Tibial artery (tissue), 4 donors: ENCODE measurements at regions of chr3 and their contacts with region 1.

Region 1: DNA sequence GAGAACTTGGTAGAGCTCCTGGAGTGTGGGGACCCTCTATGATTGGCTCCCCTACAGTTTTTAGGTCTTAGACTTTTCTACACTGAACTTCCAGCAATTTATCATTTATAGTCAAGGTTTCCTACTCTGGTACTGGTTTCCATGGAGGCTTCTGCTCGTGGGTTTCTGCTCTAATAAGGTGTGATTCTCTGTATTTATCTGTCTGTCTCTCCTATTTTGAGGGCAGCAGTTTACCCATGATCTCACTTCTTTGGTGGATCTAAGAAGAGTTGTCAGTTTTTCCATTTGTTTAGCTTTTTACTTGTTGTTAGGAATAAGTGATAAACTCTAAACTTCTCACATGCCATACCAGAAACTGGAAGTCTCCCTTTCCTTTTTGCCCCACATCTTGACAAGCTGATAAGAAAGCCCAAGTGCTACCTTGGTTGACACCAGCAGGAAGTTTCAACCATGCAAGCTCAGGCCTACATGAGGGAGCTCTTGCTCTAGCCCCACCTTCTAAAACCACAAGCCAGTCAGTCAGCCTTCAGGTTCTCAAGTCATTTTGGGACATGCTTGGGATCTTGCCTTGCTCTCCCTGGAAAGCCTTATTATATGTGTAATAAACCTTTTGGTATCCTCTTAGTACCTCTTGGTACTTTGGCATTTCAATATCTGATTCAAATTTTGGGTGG is 10.0 kb downstream of the TIMMDC1 start:
- DNase-seq: no peak
- H3K4me3 ChIP-seq: no peak overlapping the region
- H3K27ac ChIP-seq: no peak overlapping the region
- H3K4me1 ChIP-seq: no peaks in the 10 kb centered on the region
- H3K27me3 ChIP-seq: no peaks in the 10 kb centered on the region
- CTCF ChIP-seq: no peak

Region 2: DNA sequence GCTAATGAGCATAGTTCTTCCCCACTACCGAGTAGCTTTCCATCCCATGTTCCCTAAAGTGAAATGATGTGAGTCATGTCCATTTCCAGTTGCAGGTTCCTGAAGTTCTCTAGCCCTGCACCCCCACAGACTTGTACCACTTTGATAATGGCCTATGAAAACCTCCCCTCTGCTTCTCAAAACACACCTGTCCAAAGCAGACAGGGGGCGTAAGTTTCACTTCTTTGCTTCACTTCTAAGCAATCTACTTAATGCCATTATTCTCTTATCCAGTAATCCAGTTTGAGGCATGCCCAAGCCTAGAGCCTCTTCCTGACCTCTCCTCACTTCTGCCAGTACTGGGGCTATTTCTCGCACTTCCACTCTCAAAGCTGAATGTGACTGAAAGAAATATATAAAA is 778.8 kb before region 1 on chr3:
- intact Hi-C with region 1: no loop called
- DNase-seq: no peak
- H3K4me3 ChIP-seq: no peak overlapping the region
- H3K27ac ChIP-seq: no peak overlapping the region
- H3K4me1 ChIP-seq: no peaks in the 10 kb centered on the region
- H3K27me3 ChIP-seq: no peaks in the 10 kb centered on the region
- CTCF ChIP-seq: no peak

Region 3: GRCh38 chr3:119579366-119580165 is 71.3 kb after region 1 on chr3 and contains the start of gene ADPRH:
- intact Hi-C with region 1: loop called (anchors 10 kb)
- DNase-seq: peak; percentile 52 to 86
- H3K4me3 ChIP-seq: peak within 1 kb of the TSS; percentile 68 to 74
- H3K27ac ChIP-seq: peak within 1 kb of the TSS; percentile 91 to 93
- H3K4me1 ChIP-seq: peaks cover 0 to 14% (median 3%) of the 10 kb centered on the region in 4 donors
- H3K27me3 ChIP-seq: no peaks in the 10 kb centered on the region
- CTCF ChIP-seq: no peak